Mammary epithelial cell (primary cell): ENCODE measurements at regions of chr1 and their contacts with region 1.

Region 1: DNA sequence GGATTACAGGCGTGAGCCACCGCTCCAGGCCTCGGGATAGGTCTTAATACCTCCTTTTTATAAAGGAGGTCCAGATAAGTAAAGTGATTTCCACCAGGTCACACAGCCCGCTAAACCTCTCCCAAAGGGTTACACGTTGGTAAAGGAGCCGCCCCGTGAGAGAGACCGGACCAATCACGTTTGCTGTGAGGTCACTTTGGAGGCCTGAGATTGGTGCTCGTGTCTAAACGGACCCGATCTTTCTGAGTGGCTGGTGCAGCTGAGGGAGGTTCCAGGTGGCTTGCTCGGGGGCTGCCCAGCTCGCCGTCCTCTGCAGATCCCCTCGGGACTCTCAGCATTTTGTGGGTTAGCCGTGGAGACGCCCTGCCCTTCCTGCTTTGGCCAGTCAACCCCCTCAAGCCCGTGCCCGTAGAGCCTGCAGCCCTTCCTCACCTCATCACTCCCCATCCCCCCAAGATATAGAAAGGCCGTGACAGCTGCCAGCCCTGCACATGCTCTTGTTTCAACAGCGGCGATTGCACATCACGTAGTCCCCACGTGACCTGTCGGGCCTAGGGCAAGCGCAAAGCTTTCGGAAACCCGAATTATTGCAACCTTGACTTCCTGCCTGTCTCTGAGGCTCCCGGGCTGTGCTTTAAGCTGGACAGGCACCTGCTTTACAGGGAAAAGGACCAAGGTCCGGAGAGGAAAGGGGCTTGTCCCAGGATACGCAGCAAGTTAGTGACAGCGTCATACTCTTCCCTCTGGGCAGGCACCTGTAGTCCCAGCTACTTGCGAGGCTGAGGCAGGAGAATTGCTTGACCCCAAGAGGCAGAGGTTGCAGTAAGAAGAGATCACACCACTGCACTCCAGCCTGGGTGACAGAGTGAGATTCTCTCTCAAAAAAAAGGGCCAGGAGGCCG is 5.0 kb upstream of the COA7 start:
- DNase-seq: peak; percentile 88
- H3K4me3 ChIP-seq: peak overlapping the region; percentile 38 to 68 (median 55)
- H3K27ac ChIP-seq: peak overlapping the region; percentile 0
- H3K4me1 ChIP-seq: peaks cover 17% of the 10 kb centered on the region
- H3K27me3 ChIP-seq: no peaks in the 10 kb centered on the region
- CTCF ChIP-seq: no peak

Region 2: GRCh38 chr1:52748119-52748518 is 45.0 kb after region 1 on chr1:
- CTCF ChIA-PET with region 1: no interaction called
- dilution Hi-C with region 1: no loop called
- in situ Hi-C with region 1: no loop called
- intact Hi-C with region 1: loop called (anchors 1 kb)
- DNase-seq: no peak
- H3K4me3 ChIP-seq: no peak overlapping the region
- H3K27ac ChIP-seq: no peak overlapping the region
- H3K4me1 ChIP-seq: no peaks in the 10 kb centered on the region
- H3K27me3 ChIP-seq: no peaks in the 10 kb centered on the region
- CTCF ChIP-seq: peak; percentile 16 to 32

Region 3: DNA sequence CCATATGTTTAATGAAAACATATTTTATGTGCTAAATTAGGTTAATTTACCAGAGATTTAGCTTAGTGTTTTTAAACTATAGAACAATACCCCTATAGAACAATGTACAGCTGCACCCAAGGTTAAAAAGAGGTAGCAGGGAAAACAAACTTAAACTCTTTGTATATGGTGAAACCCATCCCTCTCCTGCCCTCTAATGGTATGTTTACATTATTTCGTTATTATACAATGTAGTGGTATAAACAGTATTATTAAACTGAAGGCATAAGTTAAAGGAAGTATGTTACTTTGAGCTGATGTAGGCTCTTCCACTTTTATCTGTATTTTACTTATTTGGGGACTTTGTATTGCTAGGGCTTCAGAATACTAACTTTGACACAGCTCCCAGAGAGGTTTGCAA is 122.7 kb after region 1 on chr1:
- CTCF ChIA-PET with region 1: no interaction called
- dilution Hi-C with region 1: no loop called
- in situ Hi-C with region 1: no loop called
- intact Hi-C with region 1: loop called (anchors 1 kb)
- DNase-seq: no peak
- H3K4me3 ChIP-seq: no peak overlapping the region
- H3K27ac ChIP-seq: no peak overlapping the region
- H3K4me1 ChIP-seq: no peaks in the 10 kb centered on the region
- H3K27me3 ChIP-seq: no peaks in the 10 kb centered on the region
- CTCF ChIP-seq: peak; percentile 34 to 35

Region 4: GRCh38 chr1:52920791-52921291 is 217.7 kb after region 1 on chr1:
- CTCF ChIA-PET with region 1: no interaction called
- dilution Hi-C with region 1: no loop called
- in situ Hi-C with region 1: loop called in 1 of 2 experiments (anchors 10 kb)
- intact Hi-C with region 1: loop called (anchors 1 kb)
- DNase-seq: peak; percentile 9
- H3K4me3 ChIP-seq: peak overlapping the region; percentile 67 to 79 (median 70)
- H3K27ac ChIP-seq: peak overlapping the region; percentile 26
- H3K4me1 ChIP-seq: peaks cover 8% of the 10 kb centered on the region
- H3K27me3 ChIP-seq: no peaks in the 10 kb centered on the region
- CTCF ChIP-seq: no peak

Region 5: GRCh38 chr1:53182111-53182593 is 479.0 kb after region 1 on chr1:
- CTCF ChIA-PET with region 1: no interaction called
- dilution Hi-C with region 1: no loop called
- in situ Hi-C with region 1: loop called (anchors 10 kb)
- intact Hi-C with region 1: loop called (anchors 1 kb)
- DNase-seq: peak; percentile 51
- H3K4me3 ChIP-seq: no peak overlapping the region
- H3K27ac ChIP-seq: no peak overlapping the region
- H3K4me1 ChIP-seq: no peaks in the 10 kb centered on the region
- H3K27me3 ChIP-seq: no peaks in the 10 kb centered on the region
- CTCF ChIP-seq: peak; percentile 86 to 91